HEK293 (cell line): ENCODE measurements at regions of chr10 and their contacts with region 1.

Region 1: GRCh38 chr10:88932539-88933256 is 19.9 kb downstream of the ACTA2 start:
- H3K4me3 ChIP-seq: no peak overlapping the region
- H3K27ac ChIP-seq: no peak overlapping the region
- H3K4me1 ChIP-seq: peaks cover 5% of the 10 kb centered on the region; the same call in 1 of the 2 replicates
- CTCF ChIP-seq: peak; percentile 80

Region 2: DNA sequence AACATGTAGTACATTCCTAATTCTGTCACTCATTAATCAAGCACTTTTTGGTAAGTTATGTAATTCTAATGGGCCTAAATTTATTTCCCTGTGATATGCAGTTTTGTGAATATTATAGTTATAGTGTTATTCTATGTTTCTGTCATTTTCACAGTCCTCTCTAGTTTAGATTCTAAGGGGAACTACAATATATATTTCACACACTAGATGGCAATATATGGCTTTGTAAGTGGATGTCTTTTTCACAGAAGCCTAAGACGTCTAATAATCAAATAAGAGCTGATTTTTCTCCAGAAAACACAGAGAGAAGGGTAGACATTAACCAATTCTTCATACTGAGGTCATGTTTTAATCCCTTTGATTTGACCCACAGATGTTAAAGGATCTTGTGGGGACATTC is 367.6 kb before region 1 on chr10:
- CTCF ChIA-PET with region 1: interaction called, 35 read pairs
- POLR2A ChIA-PET with region 1: no interaction called
- H3K4me3 ChIP-seq: no peak overlapping the region
- H3K27ac ChIP-seq: no peak overlapping the region
- H3K4me1 ChIP-seq: no peaks in the 10 kb centered on the region
- CTCF ChIP-seq: no peak; the same call in 1 of the 2 replicates

Region 3: DNA sequence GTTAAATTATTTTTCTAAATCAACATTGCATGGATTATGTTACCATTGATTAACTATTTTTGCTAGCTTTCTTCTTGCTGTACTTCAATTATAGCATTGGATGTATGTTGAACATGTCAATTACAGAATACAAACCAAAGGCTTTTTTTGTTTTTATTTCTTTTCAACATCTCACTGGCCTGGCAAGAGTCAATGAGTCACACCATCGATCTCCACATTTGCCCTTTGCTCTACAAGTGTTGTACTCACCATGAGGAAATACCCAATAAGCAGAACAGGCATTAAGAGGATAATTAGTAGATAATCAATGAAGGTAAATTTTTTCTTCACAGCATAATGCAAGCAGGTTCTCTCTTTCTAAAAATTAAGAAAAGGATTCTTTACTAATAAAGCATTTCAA is 104.4 kb before region 1 on chr10:
- CTCF ChIA-PET with region 1: interaction called, 456 read pairs
- POLR2A ChIA-PET with region 1: no interaction called
- H3K4me3 ChIP-seq: no peak overlapping the region
- H3K27ac ChIP-seq: no peak overlapping the region
- H3K4me1 ChIP-seq: 0 out of 2 replicates have a peak, but pooled peaks cover 2% of the 10 kb centered on the region
- CTCF ChIP-seq: no peak

Region 4: DNA sequence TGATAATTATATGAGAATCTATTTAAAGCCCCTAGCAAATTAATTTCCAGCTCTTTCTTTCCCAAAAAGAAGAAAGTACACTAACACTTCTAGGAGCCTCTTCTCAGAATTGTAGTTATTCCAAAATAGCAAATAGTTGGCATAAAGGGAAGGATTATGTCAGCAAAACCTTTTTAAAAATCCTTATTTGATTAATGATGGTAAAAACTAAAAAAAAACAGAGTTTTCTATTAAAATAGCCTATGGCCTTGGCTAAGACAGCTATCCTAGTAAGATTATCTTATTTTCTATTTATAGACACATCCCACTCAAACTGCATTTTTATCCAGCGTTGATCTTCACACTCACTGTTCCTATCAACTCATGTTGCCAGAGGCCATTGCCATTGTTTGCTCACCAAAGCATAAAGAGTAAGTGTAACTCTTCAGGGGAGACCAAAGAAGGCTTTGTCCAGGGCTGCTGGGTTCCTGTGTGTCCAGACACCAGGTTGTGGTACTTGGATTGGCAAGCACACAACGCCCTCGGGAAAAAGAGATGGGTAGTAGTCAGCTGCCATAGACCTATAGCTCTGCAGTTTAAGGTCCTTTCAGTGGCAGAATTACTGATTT is 11.6 kb before region 1 on chr10:
- CTCF ChIA-PET with region 1: interaction called, 19 read pairs
- POLR2A ChIA-PET with region 1: no interaction called
- H3K4me3 ChIP-seq: no peak overlapping the region
- H3K27ac ChIP-seq: no peak overlapping the region
- H3K4me1 ChIP-seq: no peaks in the 10 kb centered on the region; the same call in 1 of the 2 replicates
- CTCF ChIP-seq: no peak

Region 5: GRCh38 chr10:88990384-88991160 is 57.9 kb after region 1 on chr10 and contains the start of gene FAS:
- CTCF ChIA-PET with region 1: interaction called, 137 read pairs
- POLR2A ChIA-PET with region 1: interaction called, 11 read pairs
- H3K4me3 ChIP-seq: peak within 1 kb of the TSS; percentile 86
- H3K27ac ChIP-seq: peak within 1 kb of the TSS; percentile 97
- H3K4me1 ChIP-seq: peaks cover 16% of the 10 kb centered on the region
- CTCF ChIP-seq: no peak

Region 6: DNA sequence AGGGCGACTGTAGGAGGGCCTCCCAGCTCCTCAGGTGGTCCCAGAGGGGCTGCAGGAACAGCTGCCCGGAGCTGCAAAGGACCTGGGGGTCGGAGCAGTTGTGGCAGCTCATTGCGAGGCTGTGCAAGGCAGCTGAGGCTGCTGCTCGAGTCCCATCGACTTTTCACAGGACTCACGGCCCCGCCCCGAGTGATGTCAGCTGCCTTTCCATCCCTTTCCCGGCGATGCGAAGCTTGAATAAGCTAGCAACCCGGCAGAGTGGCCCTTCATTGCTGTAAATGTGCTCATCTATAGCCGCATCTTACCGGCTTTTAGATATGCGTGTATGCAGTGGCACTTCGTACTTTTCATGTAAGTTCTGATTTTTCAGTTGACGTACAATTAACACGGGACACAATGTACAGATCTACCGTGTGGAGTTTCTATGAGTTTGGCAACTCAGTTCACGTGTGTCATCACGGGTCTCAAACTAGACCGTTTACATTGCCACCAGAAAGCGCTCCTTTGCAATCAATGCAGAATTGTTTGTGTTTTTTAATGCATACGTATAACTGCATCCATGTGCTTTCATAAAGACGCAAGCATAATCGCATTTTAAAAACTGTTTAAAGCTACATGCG is 274.6 kb after region 1 on chr10 and contains the start of gene CH25H:
- CTCF ChIA-PET with region 1: interaction called, 43 read pairs
- POLR2A ChIA-PET with region 1: no interaction called
- H3K4me3 ChIP-seq: peak within 1 kb of the TSS; percentile 38
- H3K27ac ChIP-seq: peak within 1 kb of the TSS; percentile 35; the same call in 1 of the 2 replicates
- H3K4me1 ChIP-seq: peaks cover 4% of the 10 kb centered on the region; the same call in 1 of the 2 replicates
- CTCF ChIP-seq: no peak